Activated CD4-positive, alpha-beta memory T cell treated with anti-CD3 and anti-CD28 coated beads for 36 hours (primary cell): ENCODE measurements at regions of chr4 and their contacts with region 1.

Region 1: DNA sequence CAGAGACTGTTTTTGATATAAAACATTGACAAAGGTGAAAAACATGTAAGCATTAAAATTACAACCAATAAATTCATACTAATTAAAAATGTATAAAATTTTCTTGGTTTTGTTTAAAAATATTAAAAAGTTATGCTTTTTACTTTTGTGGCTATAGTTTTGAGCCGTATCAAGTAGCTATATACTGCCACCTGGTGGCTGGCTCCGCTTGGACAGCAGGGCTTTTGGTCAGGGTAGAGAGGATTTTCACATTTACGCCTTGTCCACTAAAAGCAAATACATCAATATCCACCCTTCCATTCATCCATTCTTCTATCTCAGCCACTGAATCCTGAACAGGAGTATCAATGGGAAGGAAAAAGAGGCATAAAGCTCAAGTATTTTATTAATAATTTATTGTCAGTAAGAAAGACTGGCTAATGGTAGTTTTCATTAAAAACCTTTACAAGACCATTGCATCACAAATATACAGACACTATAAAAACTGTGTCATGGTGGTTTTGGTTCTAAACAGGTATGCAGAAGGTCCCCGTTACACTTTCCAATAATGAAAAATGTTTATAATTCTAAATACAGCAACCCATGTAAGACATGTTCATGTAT is 32.1 kb upstream of the MTNR1A start:
- DNase-seq: peak; percentile 67
- H3K4me3 Mint-ChIP-seq: no peak overlapping the region
- H3K27ac Mint-ChIP-seq: no peak overlapping the region
- H3K4me1 Mint-ChIP-seq: no peaks in the 10 kb centered on the region
- H3K27me3 Mint-ChIP-seq: peaks cover 2% of the 10 kb centered on the region

Region 2: DNA sequence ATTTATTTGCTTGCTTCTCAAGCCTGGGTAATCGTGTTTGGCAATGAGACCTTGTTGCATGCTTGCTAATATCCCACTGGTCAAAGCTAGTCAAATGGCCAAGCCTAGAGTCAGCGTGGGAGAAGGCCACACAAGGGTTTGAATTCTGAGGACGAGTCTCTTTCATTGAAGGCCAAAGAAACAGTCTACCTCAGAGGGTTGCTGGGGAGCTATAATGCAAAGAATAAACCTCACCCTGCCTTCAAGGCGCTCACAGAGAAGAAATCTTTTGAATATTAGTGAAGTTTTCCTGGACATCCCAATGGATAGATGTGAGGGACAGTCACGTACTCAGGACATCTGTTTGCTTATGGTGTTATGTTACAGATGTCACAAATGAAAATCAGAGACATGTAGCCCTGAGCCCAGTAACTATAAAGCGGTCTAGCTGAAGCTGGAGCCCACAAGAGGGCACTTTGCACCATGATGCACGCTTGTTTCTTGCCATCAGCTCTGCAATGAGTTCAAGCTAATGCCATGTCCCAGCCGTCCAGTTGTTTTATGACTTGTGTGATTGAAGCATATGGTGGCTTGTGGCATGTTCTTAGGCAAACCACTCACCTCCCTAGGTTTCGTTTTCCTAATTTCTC is 519.6 kb before region 1 on chr4:
- CTCF ChIA-PET with region 1: interaction called, 17 read pairs
- POLR2A ChIA-PET with region 1: no interaction called
- intact Hi-C with region 1: loop called (anchors 1 kb)
- DNase-seq: peak; percentile 58
- H3K4me3 Mint-ChIP-seq: no peak overlapping the region
- H3K27ac Mint-ChIP-seq: no peak overlapping the region
- H3K4me1 Mint-ChIP-seq: peaks cover 15% of the 10 kb centered on the region
- H3K27me3 Mint-ChIP-seq: peaks cover 6% of the 10 kb centered on the region

Region 3: GRCh38 chr4:186297013-186297645 is 290.4 kb before region 1 on chr4:
- CTCF ChIA-PET with region 1: interaction called, 26 read pairs
- POLR2A ChIA-PET with region 1: no interaction called
- intact Hi-C with region 1: loop called (anchors 1 kb)
- DNase-seq: no peak
- H3K4me3 Mint-ChIP-seq: no peak overlapping the region
- H3K27ac Mint-ChIP-seq: no peak overlapping the region
- H3K4me1 Mint-ChIP-seq: peaks cover 9% of the 10 kb centered on the region
- H3K27me3 Mint-ChIP-seq: peaks cover 29% of the 10 kb centered on the region

Region 4: DNA sequence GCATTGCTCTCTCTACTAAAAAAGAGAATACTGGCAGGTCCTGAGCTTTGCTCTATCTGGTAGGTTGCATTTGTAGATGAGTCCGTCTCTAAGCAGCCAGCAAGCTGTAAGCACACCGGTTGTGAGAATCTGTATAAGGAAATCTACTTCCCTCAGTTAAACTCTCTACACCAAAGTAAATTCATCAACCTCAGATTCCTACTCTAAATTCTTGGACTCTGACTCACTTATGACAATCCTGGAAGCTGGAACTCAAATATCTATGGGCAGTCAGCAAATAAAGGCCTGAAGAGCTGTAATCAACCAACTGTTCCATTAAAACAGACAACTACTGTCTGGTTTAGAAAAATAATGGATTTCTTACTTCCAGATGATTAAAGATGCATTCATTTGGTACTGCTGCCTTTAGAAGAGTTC is 98.3 kb after region 1 on chr4:
- CTCF ChIA-PET with region 1: no interaction called
- POLR2A ChIA-PET with region 1: no interaction called
- intact Hi-C with region 1: no loop called
- DNase-seq: no peak
- H3K4me3 Mint-ChIP-seq: no peak overlapping the region
- H3K27ac Mint-ChIP-seq: no peak overlapping the region
- H3K4me1 Mint-ChIP-seq: no peaks in the 10 kb centered on the region
- H3K27me3 Mint-ChIP-seq: no peaks in the 10 kb centered on the region